ENCODE measurements at regions of chrX and their contacts with region 1.

Region 1: GRCh38 chrX:53445977-53446376 is 11.8 kb upstream of the HSD17B10 start:
- DNase-seq: peak in 1 of 2 experiments; percentile 48
- H3K4me3 ChIP-seq: no peak overlapping the region
- H3K27ac ChIP-seq: no peak overlapping the region
- H3K4me1 ChIP-seq: no peaks in the 10 kb centered on the region
- H3K27me3 ChIP-seq: peaks cover 0 to 2% (median under 1%) of the 10 kb centered on the region in 4 experiments; a peak in 3 of 7 replicates
- CTCF ChIP-seq: peak; percentile 5 to 67 (median 62)
- EP300 ChIP-seq: no peak
- POLR2A ChIP-seq: no peak
- RAD21 ChIP-seq: peak; percentile 57 to 70

Region 2: DNA sequence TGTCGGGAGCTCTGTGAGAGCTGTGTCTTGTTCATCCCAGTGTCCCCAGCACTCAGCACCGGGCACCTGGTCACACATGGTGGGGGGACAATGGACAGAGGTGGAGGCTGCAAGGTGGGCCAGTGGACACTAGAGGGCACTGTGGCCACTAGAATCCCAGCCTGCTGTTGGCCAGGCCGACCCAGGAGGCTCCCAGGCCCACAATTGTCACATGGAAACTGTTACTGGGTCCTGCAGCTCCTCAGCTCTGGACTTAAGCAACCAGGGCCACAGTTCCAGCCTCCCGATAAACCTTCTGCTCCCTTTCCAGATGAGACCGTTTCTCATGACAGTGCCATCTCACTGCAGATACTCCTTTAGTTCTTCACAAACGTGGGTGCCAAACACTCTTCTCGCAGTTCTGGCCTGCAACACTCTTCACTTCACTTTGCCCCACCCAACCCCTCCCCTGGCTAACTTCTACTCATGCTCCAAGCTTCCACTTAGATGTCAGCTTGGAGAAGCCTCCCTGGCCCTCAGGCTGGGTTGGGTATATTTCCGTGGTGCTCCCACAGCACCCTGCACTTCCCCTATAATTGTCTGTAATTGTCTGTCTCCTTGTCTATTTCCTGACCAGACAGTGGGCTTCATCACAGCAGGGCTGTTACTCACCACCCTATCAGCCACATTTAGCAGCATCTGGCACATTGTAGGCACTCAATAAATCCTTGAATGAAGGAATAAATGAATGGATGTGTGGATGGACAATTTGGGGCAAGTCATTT is 161.1 kb before region 1 on chrX:
- CTCF ChIA-PET with region 1: interaction called, 13 read pairs
- POLR2A ChIA-PET with region 1: no interaction called
- DNase-seq: peak; percentile 21 to 77
- H3K4me3 ChIP-seq: no peak overlapping the region
- H3K27ac ChIP-seq: no peak overlapping the region
- H3K4me1 ChIP-seq: peaks cover 0 to 10% (median 4%) of the 10 kb centered on the region in 4 experiments; a peak in 6 of 7 replicates
- H3K27me3 ChIP-seq: no peaks in the 10 kb centered on the region
- CTCF ChIP-seq: peak in 2 of 3 experiments; percentile 57 to 84; a peak in 3 of 4 replicates
- EP300 ChIP-seq: no peak
- POLR2A ChIP-seq: no peak
- RAD21 ChIP-seq: peak; percentile 64 to 71

Region 3: DNA sequence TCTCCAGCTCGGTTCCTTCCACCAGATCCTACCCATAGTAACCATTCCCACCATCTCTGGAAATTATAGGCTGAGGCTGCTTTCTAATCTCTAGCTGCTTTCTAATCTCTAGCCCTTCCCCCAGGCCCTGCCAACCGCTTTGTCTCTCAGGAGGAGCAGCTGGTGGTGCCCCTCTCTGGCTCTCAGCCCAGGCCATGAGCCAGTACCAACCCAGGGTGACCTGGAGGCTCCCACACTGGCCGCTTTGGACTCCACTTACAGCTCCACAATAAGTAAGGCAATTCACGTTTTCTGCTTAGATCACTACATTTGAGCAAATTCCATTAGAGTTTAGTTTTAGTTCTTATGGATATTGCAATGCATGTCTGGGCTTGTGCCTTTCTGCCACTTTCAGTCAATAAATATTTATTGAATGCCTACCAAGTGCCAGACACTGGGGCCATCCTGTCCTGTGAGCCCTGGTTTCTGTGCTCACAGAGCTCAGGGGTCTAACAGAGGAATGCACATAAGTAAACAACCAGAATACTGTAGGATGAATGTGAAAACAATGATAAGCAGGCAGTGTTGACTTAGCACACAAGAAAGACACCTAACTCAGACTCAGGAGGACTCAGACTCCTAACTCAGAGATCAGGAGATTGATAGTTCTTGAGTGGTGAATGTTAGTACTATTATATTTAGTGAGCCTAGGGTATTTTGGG is 62.5 kb before region 1 on chrX:
- CTCF ChIA-PET with region 1: no interaction called
- POLR2A ChIA-PET with region 1: no interaction called
- DNase-seq: no peak
- H3K4me3 ChIP-seq: no peak overlapping the region
- H3K27ac ChIP-seq: no peak overlapping the region; the same call in 1 of the 2 replicates
- H3K4me1 ChIP-seq: no peaks in the 10 kb centered on the region
- H3K27me3 ChIP-seq: no peaks in the 10 kb centered on the region
- CTCF ChIP-seq: no peak
- EP300 ChIP-seq: no peak
- POLR2A ChIP-seq: no peak
- RAD21 ChIP-seq: no peak

Region 4: DNA sequence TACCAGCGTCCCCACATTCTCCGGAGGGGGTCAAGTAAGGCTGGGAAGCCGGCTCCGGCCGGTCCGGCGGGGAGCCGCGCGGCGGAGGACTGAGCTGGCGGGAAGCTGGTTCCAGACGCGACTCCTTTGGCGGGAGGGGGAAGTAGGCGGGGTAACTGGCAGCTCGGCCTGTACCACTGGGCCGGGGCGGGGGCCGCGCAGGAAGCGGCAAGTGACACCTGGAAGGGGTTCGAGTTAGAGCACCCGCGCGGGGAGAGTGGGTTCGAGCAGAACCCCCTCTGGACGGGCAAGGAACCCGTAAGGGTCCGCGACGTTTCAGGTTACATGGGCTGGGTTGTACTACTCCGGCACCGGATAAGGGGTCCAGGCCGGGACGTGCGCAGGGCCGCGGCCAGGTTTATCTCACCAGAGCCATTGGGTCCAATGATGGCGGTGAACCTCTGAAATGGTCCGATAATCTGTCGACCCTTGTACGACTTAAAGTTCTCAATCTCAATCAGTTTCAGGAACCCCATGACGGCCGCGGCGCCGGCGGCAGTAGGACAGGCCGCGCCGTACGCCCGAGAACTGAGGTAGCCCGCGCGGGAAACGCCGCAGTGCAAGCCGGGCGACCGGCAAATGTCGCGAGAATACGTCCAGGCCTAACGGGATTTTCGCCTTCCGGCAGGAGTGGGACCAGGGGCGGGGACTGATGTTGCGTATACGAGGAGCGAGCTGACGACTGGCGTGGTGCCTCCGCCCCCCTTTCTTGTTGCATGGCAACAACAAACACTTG is 23.7 kb before region 1 on chrX and contains the start of gene SMC1A:
- CTCF ChIA-PET with region 1: interaction called, 18 read pairs
- POLR2A ChIA-PET with region 1: interaction called, 3 read pairs
- DNase-seq: peak; percentile 91 to 92
- H3K4me3 ChIP-seq: peak within 1 kb of the TSS; percentile 74 to 79 (median 78)
- H3K27ac ChIP-seq: peak within 1 kb of the TSS; percentile 97
- H3K4me1 ChIP-seq: peaks cover 0 to 8% (median 4%) of the 10 kb centered on the region in 4 experiments; a peak in 5 of 7 replicates
- H3K27me3 ChIP-seq: no peaks in the 10 kb centered on the region
- CTCF ChIP-seq: no peak
- EP300 ChIP-seq: peak in 1 of 2 experiments; percentile 74; a peak in 1 of 3 replicates
- POLR2A ChIP-seq: peak in 1 of 2 experiments; percentile 91; a peak in 2 of 3 replicates
- RAD21 ChIP-seq: no peak
- total RNA-seq, gene SMC1A: 98.1 and 104 TPM in 2 replicates

Region 5: DNA sequence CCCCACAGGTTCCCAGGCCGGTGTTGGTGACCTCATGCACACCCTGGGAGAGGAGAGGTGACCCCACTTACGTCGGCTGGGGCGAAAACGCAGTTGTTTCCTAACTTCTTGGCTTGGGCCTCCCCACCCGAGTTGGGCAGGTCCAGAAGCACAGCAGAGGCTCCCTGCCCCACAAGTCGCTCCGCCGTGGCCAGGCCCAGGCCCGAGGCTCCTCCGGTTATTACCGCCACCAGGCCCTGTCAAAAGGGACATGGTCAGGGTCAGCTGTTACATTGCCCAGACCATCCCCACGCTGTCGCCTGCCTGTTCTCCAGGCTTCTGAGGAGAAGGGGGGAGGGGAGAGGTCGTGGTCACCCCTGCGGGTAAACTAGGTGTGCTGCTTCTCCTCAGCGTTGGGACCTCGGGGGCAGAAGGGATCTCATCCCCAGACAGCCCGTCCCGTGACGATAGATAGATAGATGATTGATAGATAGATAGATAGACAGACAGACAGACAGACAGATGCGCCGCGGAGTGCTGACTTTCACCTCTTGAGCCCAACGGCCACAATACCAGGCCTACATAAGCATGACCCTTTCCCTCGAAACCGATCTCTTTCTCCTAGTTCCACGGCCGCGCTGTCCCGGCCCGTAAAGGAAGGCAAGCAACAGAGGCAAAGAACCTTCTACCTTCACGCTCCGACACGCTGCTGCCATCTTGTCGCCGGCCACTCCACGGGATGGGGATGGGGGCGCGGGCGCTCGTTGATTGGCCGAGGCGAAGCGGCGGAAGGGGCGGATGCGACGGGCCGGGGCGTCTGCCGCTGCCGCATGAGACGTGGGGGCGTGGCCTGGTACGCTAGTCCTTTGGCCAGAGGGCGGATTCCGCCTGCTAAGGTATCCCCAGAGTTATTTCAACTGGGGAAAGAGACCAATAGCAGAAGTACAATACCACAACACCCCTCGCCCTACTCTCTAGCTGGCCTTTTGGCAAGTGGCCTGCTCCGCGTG is 12.0 kb before region 1 on chrX and contains the start of gene HSD17B10:
- CTCF ChIA-PET with region 1: interaction called, 18 read pairs
- POLR2A ChIA-PET with region 1: no interaction called
- DNase-seq: peak in 1 of 2 experiments; percentile 83
- H3K4me3 ChIP-seq: peak within 1 kb of the TSS; percentile 74 to 94 (median 80)
- H3K27ac ChIP-seq: peak within 1 kb of the TSS; percentile 67; the same call in 1 of the 2 replicates
- H3K4me1 ChIP-seq: peaks cover 0 to 7% (median 0%) of the 10 kb centered on the region in 4 experiments; a peak in 3 of 7 replicates
- H3K27me3 ChIP-seq: no peaks in the 10 kb centered on the region
- CTCF ChIP-seq: no peak
- EP300 ChIP-seq: no peak
- POLR2A ChIP-seq: peak in 1 of 2 experiments; percentile 53; a peak in 2 of 3 replicates
- RAD21 ChIP-seq: no peak
- total RNA-seq, gene HSD17B10: 114 and 116 TPM in 2 replicates

Region 6: GRCh38 chrX:53458082-53458481 is 12.1 kb after region 1 on chrX:
- CTCF ChIA-PET with region 1: interaction called, 12 read pairs
- POLR2A ChIA-PET with region 1: no interaction called
- DNase-seq: no peak
- H3K4me3 ChIP-seq: no peak overlapping the region
- H3K27ac ChIP-seq: no peak overlapping the region
- H3K4me1 ChIP-seq: no peaks in the 10 kb centered on the region
- H3K27me3 ChIP-seq: no peaks in the 10 kb centered on the region
- CTCF ChIP-seq: peak in 1 of 3 experiments; percentile 10; a peak in 1 of 4 replicates
- EP300 ChIP-seq: no peak
- POLR2A ChIP-seq: no peak
- RAD21 ChIP-seq: peak; percentile 11 to 17; a peak in 1 of 4 replicates

Region 7: GRCh38 chrX:53481816-53482465 is 36.0 kb after region 1 on chrX:
- CTCF ChIA-PET with region 1: interaction called, 21 read pairs
- POLR2A ChIA-PET with region 1: no interaction called
- DNase-seq: peak in 1 of 2 experiments; percentile 61
- H3K4me3 ChIP-seq: no peak overlapping the region
- H3K27ac ChIP-seq: no peak overlapping the region
- H3K4me1 ChIP-seq: peaks cover 0 to 3% (median 0%) of the 10 kb centered on the region in 4 experiments; a peak in 4 of 7 replicates
- H3K27me3 ChIP-seq: no peaks in the 10 kb centered on the region
- CTCF ChIP-seq: peak; percentile 19 to 69 (median 55)
- EP300 ChIP-seq: no peak
- POLR2A ChIP-seq: no peak
- RAD21 ChIP-seq: peak; percentile 55 to 68

Region 8: GRCh38 chrX:53547668-53548067 is 101.7 kb after region 1 on chrX:
- CTCF ChIA-PET with region 1: no interaction called
- POLR2A ChIA-PET with region 1: no interaction called
- DNase-seq: no peak
- H3K4me3 ChIP-seq: no peak overlapping the region
- H3K27ac ChIP-seq: no peak overlapping the region
- H3K4me1 ChIP-seq: no peaks in the 10 kb centered on the region
- H3K27me3 ChIP-seq: no peaks in the 10 kb centered on the region
- CTCF ChIP-seq: no peak
- EP300 ChIP-seq: no peak
- POLR2A ChIP-seq: no peak
- RAD21 ChIP-seq: no peak

Region 9: GRCh38 chrX:53606456-53606855 is 160.5 kb after region 1 on chrX:
- CTCF ChIA-PET with region 1: no interaction called
- POLR2A ChIA-PET with region 1: no interaction called
- DNase-seq: no peak
- H3K4me3 ChIP-seq: no peak overlapping the region
- H3K27ac ChIP-seq: no peak overlapping the region
- H3K4me1 ChIP-seq: no peaks in the 10 kb centered on the region
- H3K27me3 ChIP-seq: no peaks in the 10 kb centered on the region
- CTCF ChIP-seq: no peak
- EP300 ChIP-seq: no peak
- POLR2A ChIP-seq: no peak
- RAD21 ChIP-seq: no peak